H1 (cell line): ENCODE measurements at regions of chr3 and their contacts with region 1.

Region 1: GRCh38 chr3:148309390-148310035 is 388.2 kb upstream of the AGTR1 start:
- DNase-seq: peak in 1 of 2 experiments; percentile 53
- H3K4me3 ChIP-seq: no peak overlapping the region
- H3K27ac ChIP-seq: no peak overlapping the region
- H3K4me1 ChIP-seq: no peaks in the 10 kb centered on the region
- H3K27me3 ChIP-seq: no peaks in the 10 kb centered on the region
- CTCF ChIP-seq: peak; percentile 28 to 74 (median 57)
- EP300 ChIP-seq: no peak
- POLR2A ChIP-seq: no peak
- RAD21 ChIP-seq: peak; percentile 62 to 76

Region 2: DNA sequence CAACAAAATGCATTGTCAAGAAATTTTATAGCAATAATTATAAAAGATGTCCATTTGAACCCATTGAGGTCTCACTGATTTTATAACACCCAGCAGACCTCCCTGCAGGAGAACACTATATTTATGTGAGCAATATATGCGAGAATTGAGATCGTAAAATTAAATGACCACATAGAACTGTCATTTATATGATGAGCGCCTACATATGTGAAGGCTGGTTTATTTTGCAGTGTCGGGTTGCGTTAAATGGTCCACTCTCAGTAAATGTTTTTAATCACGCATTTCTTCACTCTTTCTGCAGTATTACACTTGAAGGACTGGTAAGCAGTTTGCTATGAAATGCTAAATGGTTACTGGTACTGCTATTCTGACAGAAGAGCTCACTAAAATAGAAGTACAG is 20.4 kb before region 1 on chr3:
- CTCF ChIA-PET with region 1: interaction called, 10 read pairs
- POLR2A ChIA-PET with region 1: no interaction called
- DNase-seq: no peak
- H3K4me3 ChIP-seq: no peak overlapping the region
- H3K27ac ChIP-seq: no peak overlapping the region
- H3K4me1 ChIP-seq: no peaks in the 10 kb centered on the region
- H3K27me3 ChIP-seq: no peaks in the 10 kb centered on the region
- CTCF ChIP-seq: no peak
- EP300 ChIP-seq: no peak
- POLR2A ChIP-seq: no peak
- RAD21 ChIP-seq: no peak

Region 3: DNA sequence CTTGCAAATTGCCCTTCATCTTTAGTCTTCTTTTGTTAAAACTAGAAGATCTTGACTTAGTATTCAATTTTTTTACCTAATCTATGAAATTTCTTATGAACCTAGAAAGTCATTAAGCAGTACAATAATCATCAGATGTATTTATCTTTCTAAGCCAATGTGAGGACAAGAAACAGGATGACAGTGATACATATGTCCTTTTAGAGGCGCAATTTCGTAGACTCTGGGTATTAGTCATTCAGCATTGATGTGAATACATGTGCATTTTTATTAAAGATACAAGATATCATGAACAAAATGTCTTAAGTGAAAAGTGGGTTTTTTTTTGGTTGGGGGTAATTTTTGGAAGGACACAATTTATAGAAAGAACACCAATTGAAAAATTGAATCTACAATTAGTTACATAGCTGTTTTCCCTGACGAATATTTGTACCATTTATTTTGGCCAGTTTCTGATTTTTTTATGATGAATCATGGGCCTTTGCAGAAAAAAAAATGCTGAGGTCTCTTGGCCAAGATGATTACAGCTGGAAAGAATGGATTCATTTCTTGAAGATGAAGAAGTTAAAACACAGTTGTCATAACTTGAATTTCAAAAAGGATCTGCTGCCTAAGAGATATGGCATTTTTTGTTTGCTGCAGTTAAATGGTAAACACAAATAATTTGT is 339.3 kb after region 1 on chr3:
- CTCF ChIA-PET with region 1: no interaction called
- POLR2A ChIA-PET with region 1: no interaction called
- DNase-seq: no peak
- H3K4me3 ChIP-seq: no peak overlapping the region
- H3K27ac ChIP-seq: no peak overlapping the region
- H3K4me1 ChIP-seq: no peaks in the 10 kb centered on the region
- H3K27me3 ChIP-seq: no peaks in the 10 kb centered on the region
- CTCF ChIP-seq: no peak
- EP300 ChIP-seq: no peak
- POLR2A ChIP-seq: no peak
- RAD21 ChIP-seq: no peak